B cell (primary cell): ENCODE measurements at regions of chr4 and their contacts with region 1.

Region 1: DNA sequence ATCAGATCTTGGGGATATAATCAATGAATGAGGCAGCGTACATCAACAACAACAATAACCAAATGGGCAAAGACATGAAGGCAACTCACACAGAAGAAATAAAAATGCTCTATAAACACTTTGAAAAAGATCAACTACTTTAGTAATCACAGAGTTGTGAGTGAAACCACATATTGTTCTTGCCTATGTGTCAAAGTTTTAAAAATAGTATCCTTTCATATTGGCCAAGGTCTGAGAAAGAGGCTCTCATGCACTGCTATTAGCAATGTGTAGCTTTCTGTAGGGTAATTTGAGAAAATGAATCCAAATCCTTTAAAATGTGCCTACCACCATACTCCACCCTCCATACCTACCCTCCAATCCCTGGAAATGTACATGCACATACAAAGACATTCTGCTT is 25.0 kb downstream of the COQ2 start:
- DNase-seq: no peak
- ATAC-seq: no peak
- H3K4me3 ChIP-seq: no peak overlapping the region
- H3K4me3 Mint-ChIP-seq: no peak overlapping the region
- H3K27ac ChIP-seq: peak overlapping the region in 1 of 2 donors; percentile 5
- H3K27ac Mint-ChIP-seq: peak overlapping the region; percentile 21
- H3K4me1 ChIP-seq: peaks cover 44 to 53% of the 10 kb centered on the region in 2 donors
- H3K4me1 Mint-ChIP-seq: peaks cover 42% of the 10 kb centered on the region
- H3K27me3 ChIP-seq: no peaks in the 10 kb centered on the region
- H3K27me3 Mint-ChIP-seq: no peaks in the 10 kb centered on the region
- CTCF ChIP-seq: no peak

Region 2: DNA sequence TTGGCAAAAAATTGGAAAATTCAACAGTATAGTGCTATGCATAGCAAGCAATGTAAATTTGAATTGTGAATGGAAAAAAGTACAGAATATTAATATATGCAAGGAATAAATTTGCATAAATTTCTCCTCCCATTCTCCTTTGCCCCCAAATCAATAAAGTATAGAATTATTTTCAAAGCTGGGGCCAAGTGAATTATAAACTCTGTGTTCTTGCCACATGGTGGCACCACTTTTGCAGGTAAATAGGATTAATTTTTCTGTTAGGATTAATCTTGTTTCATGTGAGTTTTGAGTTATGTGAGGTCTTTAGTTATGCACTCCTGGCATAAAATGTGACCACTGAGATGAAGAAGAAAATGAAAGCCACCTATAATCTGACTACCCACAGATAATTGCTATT is 204.7 kb before region 1 on chr4:
- CTCF ChIA-PET with region 1: interaction called, 30 read pairs
- POLR2A ChIA-PET with region 1: no interaction called
- intact Hi-C with region 1: loop called (anchors 1 kb)
- DNase-seq: peak; percentile 52
- ATAC-seq: no peak
- H3K4me3 ChIP-seq: no peak overlapping the region
- H3K4me3 Mint-ChIP-seq: no peak overlapping the region
- H3K27ac ChIP-seq: no peak overlapping the region
- H3K27ac Mint-ChIP-seq: no peak overlapping the region
- H3K4me1 ChIP-seq: no peaks in the 10 kb centered on the region
- H3K4me1 Mint-ChIP-seq: peaks cover 2% of the 10 kb centered on the region
- H3K27me3 ChIP-seq: no peaks in the 10 kb centered on the region
- H3K27me3 Mint-ChIP-seq: no peaks in the 10 kb centered on the region
- CTCF ChIP-seq: peak; percentile 59

Region 3: GRCh38 chr4:83093130-83093529 is 166.5 kb before region 1 on chr4:
- CTCF ChIA-PET with region 1: interaction called, 32 read pairs
- POLR2A ChIA-PET with region 1: no interaction called
- intact Hi-C with region 1: no loop called
- DNase-seq: no peak
- ATAC-seq: no peak
- H3K4me3 ChIP-seq: no peak overlapping the region
- H3K4me3 Mint-ChIP-seq: no peak overlapping the region
- H3K27ac ChIP-seq: peak overlapping the region in 1 of 2 donors; percentile 58
- H3K27ac Mint-ChIP-seq: peak overlapping the region; percentile 80
- H3K4me1 ChIP-seq: peaks cover 0 to 5% of the 10 kb centered on the region in 2 donors
- H3K4me1 Mint-ChIP-seq: peaks cover 29% of the 10 kb centered on the region
- H3K27me3 ChIP-seq: no peaks in the 10 kb centered on the region
- H3K27me3 Mint-ChIP-seq: no peaks in the 10 kb centered on the region
- CTCF ChIP-seq: no peak

Region 4: GRCh38 chr4:83150653-83151330 is 108.8 kb before region 1 on chr4:
- CTCF ChIA-PET with region 1: interaction called, 35 read pairs
- POLR2A ChIA-PET with region 1: no interaction called
- intact Hi-C with region 1: no loop called
- DNase-seq: no peak
- ATAC-seq: no peak
- H3K4me3 ChIP-seq: no peak overlapping the region
- H3K4me3 Mint-ChIP-seq: no peak overlapping the region
- H3K27ac ChIP-seq: no peak overlapping the region
- H3K27ac Mint-ChIP-seq: no peak overlapping the region
- H3K4me1 ChIP-seq: peaks cover 31 to 33% of the 10 kb centered on the region in 2 donors
- H3K4me1 Mint-ChIP-seq: peaks cover 42% of the 10 kb centered on the region
- H3K27me3 ChIP-seq: no peaks in the 10 kb centered on the region
- H3K27me3 Mint-ChIP-seq: no peaks in the 10 kb centered on the region
- CTCF ChIP-seq: no peak

Region 5: DNA sequence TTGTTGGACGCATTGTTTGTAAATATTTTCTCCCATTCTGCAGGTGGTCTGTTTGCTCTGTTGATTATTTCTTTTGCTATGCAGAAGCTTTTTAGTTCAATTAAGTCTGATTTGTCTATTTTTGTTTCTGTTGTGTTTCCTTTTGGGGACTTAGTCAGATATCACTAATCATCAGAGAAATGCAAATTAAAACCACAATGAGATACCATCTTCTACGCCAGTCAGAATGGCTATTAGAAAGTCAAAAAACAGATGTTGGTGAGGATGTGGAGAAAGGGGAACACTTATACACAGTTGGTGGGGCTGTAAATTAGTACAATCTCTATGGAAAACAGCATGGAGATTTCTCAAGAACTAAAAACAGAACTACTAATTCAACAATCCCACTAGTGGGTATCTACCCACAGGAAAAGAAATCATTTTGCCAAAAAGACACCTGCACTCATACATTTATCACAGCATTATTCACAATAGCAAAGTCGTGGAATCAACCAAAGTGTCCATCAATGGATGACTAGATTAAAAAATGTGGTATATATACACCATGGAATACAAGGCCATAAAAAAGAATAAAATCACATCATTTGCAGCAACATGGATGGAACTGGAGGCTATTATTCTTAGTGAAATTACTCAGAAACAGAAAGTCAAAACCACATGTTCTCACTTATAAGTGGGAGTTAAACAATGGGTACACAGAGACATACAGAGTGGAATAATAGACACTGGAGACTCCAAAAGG is 16.9 kb after region 1 on chr4:
- CTCF ChIA-PET with region 1: interaction called, 96 read pairs
- POLR2A ChIA-PET with region 1: interaction called, 6 read pairs
- intact Hi-C with region 1: no loop called
- DNase-seq: peak; percentile 51
- ATAC-seq: peak; percentile 54
- H3K4me3 ChIP-seq: peak overlapping the region in 1 of 5 experiments; percentile 23
- H3K4me3 Mint-ChIP-seq: peak overlapping the region; percentile 52
- H3K27ac ChIP-seq: peak overlapping the region in 1 of 2 donors; percentile 48
- H3K27ac Mint-ChIP-seq: peak overlapping the region; percentile 62
- H3K4me1 ChIP-seq: peaks cover 28 to 33% of the 10 kb centered on the region in 2 donors
- H3K4me1 Mint-ChIP-seq: peaks cover 56% of the 10 kb centered on the region
- H3K27me3 ChIP-seq: no peaks in the 10 kb centered on the region
- H3K27me3 Mint-ChIP-seq: no peaks in the 10 kb centered on the region
- CTCF ChIP-seq: no peak